Endothelial cell of umbilical vein (primary cell): ENCODE measurements at regions of chr1 and their contacts with region 1.

Region 1: GRCh38 chr1:32650752-32651460 is at the start of gene RBBP4:
- DNase-seq: peak; percentile 98
- H3K4me3 ChIP-seq: peak within 1 kb of the TSS; percentile 65 to 90 (median 68)
- H3K27ac ChIP-seq: peak within 1 kb of the TSS; percentile 95
- H3K4me1 ChIP-seq: peaks cover 18% of the 10 kb centered on the region
- H3K27me3 ChIP-seq: no peaks in the 10 kb centered on the region
- CTCF ChIP-seq: no peak
- POLR2A ChIP-seq: peak; percentile 85
- total RNA-seq, gene RBBP4: 228 and 241 TPM in 2 replicates

Region 2: GRCh38 chr1:32329931-32330466 is 320.9 kb before region 1 on chr1:
- CTCF ChIA-PET with region 1: no interaction called
- POLR2A ChIA-PET with region 1: no interaction called
- dilution Hi-C with region 1: no loop called
- intact Hi-C with region 1: no loop called
- DNase-seq: no peak
- H3K4me3 ChIP-seq: no peak overlapping the region
- H3K27ac ChIP-seq: no peak overlapping the region
- H3K4me1 ChIP-seq: peaks cover 14% of the 10 kb centered on the region
- H3K27me3 ChIP-seq: no peaks in the 10 kb centered on the region
- CTCF ChIP-seq: no peak
- POLR2A ChIP-seq: no peak

Region 3: DNA sequence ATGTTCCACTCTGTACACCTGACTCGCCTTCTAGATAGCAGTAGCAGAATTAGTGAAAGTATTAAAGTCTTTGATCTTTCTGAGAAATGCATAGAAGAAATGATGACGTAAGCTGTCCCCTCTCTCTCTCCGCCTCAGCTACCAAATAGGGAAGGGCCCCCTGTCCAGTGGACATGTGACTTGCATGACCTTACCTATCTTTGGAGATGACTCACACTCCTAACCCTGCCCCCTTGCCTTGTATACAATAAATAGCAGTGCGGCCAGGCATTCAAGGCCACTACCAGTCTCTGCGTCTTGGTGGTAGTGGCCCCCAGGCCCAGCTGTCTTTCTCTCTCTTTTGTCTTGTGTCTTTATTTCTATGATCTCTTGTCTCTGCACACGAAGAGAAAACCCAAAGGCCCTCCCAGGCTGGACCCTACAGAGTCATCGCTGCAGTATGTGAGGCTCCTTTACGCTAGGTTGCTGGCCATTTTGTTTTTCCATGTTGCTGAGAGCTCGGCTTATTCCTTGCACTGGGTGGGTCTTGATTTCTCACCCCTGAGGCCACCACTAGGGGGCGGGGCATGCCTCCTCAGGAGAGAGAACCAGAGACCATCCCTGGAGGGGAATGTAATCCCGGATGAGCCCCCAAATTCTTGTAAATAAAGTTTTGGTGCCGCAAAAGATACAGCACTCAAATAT is 202.0 kb before region 1 on chr1:
- CTCF ChIA-PET with region 1: interaction called, 4 read pairs
- POLR2A ChIA-PET with region 1: no interaction called
- dilution Hi-C with region 1: no loop called
- intact Hi-C with region 1: loop called (anchors 1 kb)
- DNase-seq: peak; percentile 18
- H3K4me3 ChIP-seq: no peak overlapping the region
- H3K27ac ChIP-seq: no peak overlapping the region
- H3K4me1 ChIP-seq: peaks cover 4% of the 10 kb centered on the region
- H3K27me3 ChIP-seq: peaks cover 0 to under 1% of the 10 kb centered on the region in 2 experiments
- CTCF ChIP-seq: peak; percentile 27 to 40
- POLR2A ChIP-seq: no peak

Region 4: DNA sequence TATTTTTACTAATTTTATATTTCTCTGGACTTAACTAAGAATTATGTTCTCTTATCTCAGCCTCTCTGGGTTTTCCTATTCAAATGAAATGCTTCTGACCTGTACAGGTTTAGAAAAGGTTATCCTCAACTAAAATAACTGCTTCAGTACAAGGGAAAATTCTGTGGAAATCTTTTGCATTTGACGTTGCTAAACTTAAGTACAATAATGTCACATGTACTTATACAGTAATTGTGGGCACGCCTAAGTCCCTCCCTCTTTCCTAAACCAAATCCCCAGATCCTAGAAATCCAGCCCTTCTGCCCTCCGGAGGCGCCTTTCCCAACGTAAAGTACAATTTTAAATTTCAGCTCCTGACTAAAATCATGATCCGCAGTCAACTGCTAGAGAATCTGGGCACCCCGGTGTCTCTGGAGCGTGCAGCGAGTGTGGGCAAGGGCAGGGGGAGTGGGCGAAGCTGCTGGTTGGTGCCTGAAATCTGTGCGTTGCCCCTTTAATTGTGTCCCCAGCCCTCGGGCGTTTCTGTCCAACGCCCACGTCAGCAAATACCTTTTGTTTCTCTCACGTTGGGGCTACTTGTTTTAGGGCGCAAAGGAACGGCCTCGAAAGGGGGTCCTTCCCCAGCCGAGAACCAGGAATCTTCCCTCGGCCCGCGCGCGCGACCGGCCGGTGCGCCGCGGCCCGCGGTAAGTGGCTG is 111.9 kb before region 1 on chr1 and contains the start of gene ZBTB8A:
- CTCF ChIA-PET with region 1: no interaction called
- POLR2A ChIA-PET with region 1: interaction called, 3 read pairs
- dilution Hi-C with region 1: no loop called
- intact Hi-C with region 1: loop called (anchors 2 kb)
- DNase-seq: peak; percentile 79
- H3K4me3 ChIP-seq: peak within 1 kb of the TSS; percentile 65 to 85 (median 79)
- H3K27ac ChIP-seq: peak within 1 kb of the TSS; percentile 62
- H3K4me1 ChIP-seq: peaks cover 11% of the 10 kb centered on the region
- H3K27me3 ChIP-seq: no peaks in the 10 kb centered on the region
- CTCF ChIP-seq: no peak
- POLR2A ChIP-seq: no peak
- total RNA-seq, gene ZBTB8A: 9.1 and 9.6 TPM in 2 replicates

Region 5: GRCh38 chr1:32612189-32612881 is 38.6 kb before region 1 on chr1:
- CTCF ChIA-PET with region 1: no interaction called
- POLR2A ChIA-PET with region 1: no interaction called
- dilution Hi-C with region 1: no loop called
- intact Hi-C with region 1: loop called (anchors 2 kb)
- DNase-seq: peak; percentile 86
- H3K4me3 ChIP-seq: peak overlapping the region; percentile 9 to 48 (median 44)
- H3K27ac ChIP-seq: peak overlapping the region; percentile 29
- H3K4me1 ChIP-seq: no peaks in the 10 kb centered on the region
- H3K27me3 ChIP-seq: no peaks in the 10 kb centered on the region
- CTCF ChIP-seq: peak in 1 of 2 donors; percentile 56
- POLR2A ChIP-seq: peak; percentile 90

Region 6: DNA sequence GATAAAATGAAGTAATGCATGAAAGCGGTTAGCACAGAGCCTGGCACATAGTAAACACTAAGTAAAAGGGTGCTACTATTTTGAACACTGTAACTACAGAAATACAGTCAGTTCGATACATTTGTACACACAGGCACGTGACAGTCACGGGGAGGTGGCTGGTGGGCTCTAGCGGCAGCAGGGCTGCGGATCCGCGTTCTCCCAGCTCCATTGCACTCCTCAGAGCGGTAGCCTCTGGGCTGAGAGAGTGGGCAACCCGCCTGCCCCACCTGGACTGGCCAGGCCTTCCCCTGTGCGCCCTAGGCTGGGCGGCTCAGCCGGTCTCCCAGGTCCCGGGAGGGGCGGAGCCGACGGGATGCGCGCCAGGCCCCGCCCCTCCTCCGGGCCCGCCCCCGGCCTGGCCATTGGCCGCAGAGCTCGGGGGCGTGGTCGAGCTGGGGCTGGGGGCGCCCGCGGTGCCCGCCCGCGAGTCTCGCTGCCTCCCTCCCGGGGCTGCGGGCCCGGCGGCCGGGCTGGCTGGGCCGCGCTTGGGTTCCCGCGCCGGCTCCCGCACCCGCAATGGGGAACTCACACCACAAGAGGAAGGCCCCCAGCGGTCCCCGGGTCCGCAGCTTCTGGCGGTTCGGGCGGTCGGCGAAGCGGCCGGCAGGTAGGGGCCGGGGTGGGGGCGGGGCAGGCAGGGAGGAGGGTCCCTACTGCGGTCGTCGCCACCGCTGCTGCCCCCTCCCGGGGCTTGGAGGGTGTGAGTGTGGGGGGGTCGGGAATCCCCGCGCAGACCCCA is 102.8 kb after region 1 on chr1:
- CTCF ChIA-PET with region 1: no interaction called
- POLR2A ChIA-PET with region 1: no interaction called
- dilution Hi-C with region 1: no loop called
- intact Hi-C with region 1: loop called (anchors 1 kb)
- DNase-seq: peak; percentile 73
- H3K4me3 ChIP-seq: peak overlapping the region in 1 of 3 experiments; percentile 40
- H3K27ac ChIP-seq: no peak overlapping the region
- H3K4me1 ChIP-seq: peaks cover 2% of the 10 kb centered on the region
- H3K27me3 ChIP-seq: peaks cover 0 to 4% of the 10 kb centered on the region in 2 experiments
- CTCF ChIP-seq: no peak
- POLR2A ChIP-seq: no peak

Region 7: DNA sequence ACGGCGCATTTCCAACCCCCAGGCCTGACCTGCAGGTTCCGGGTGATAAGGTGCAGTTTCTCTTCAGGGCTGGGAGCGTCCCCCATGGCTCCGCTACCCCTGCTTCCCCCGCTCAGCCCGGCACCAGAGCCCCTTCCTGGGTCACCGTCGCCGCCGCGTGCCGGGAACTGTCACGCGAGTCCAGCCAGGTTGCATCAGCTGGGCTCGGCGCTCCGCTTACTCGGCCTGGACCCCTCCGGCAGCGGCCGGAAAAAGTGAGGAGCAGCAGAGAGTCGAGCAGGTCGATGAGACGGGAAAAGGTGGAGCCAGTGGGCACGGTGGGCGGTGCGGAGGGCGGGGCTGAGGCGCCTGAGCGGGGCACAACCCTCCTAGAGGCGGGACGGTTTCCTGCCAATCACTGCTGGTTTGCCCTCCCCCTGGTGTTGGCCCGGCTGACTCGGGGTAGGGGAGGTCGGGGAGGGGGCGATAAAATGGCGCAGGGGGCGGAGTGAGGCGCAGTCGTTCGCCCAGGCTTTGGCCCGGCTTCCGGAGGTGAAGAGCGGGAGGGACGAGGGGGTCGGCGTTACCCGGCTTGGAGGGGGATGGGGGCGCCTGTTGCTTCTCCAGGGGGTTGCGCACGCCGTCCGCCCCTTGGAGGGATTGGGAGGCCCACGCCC is 166.4 kb after region 1 on chr1 and contains the starts of genes S100PBP and YARS1:
- CTCF ChIA-PET with region 1: interaction called, 3 read pairs
- POLR2A ChIA-PET with region 1: no interaction called
- dilution Hi-C with region 1: no loop called
- intact Hi-C with region 1: loop called (anchors 1 kb)
- DNase-seq: peak; percentile 98
- H3K4me3 ChIP-seq: peak within 1 kb of the TSS; percentile 54 to 92 (median 83)
- H3K27ac ChIP-seq: peak within 1 kb of the TSS; percentile 60
- H3K4me1 ChIP-seq: peaks cover 25% of the 10 kb centered on the region
- H3K27me3 ChIP-seq: no peaks in the 10 kb centered on the region
- CTCF ChIP-seq: no peak
- POLR2A ChIP-seq: no peak
- total RNA-seq, gene S100PBP: 36.9 and 38.6 TPM in 2 replicates
- total RNA-seq, gene YARS1: 130 and 144 TPM in 2 replicates